ENCODE measurements at regions of chr7 and their contacts with region 1.

Region 1: DNA sequence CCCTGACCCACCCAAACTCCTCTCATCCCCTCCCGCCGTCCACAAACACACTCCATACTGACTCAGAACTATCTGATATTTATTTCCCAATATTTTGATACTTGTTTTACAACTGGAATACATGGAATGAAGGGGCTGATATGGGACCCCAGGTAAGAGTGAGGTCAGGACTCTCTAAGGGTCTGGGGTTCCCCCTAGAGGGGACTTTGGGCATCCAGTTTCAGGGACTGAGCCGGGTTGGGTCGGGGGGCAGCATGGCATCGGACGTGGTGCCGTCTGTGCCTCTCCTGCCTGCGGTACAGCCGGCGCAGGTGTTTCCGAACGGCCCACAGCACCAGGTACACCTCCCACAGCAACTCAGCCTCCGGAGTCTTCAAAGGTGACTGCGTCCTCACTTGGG is 7.5 kb downstream of the SPACDR start:
- DNase-seq: no peak
- H3K4me3 Mint-ChIP-seq: no peak overlapping the region
- H3K27ac Mint-ChIP-seq: no peak overlapping the region
- H3K4me1 Mint-ChIP-seq: no peaks in the 10 kb centered on the region
- H3K27me3 Mint-ChIP-seq: no peaks in the 10 kb centered on the region
- CTCF ChIP-seq: no peak

Region 2: DNA sequence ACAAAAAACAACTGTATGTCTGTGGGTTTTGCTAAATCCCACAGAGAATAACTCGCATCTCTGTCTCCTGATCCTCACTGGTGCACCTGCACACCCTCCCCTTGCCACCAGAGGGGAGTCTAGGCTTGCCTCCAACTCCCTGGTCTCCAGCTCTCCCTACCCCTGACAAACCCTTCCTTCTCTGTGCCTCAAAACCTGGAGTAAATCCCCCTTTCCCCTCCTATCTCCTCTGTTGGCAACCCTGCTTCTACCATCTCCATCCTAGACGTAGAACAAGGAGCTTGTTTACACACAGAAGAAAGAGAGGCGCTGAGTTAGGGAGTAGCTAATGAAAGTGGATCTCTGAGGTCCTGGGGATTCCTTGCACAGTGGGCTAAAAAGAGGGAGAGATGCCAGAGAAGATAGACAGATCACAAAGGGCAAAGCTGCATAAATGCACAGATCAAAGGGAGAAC is 323.8 kb before region 1 on chr7:
- CTCF ChIA-PET with region 1: no interaction called
- POLR2A ChIA-PET with region 1: no interaction called
- intact Hi-C with region 1: no loop called
- DNase-seq: peak; percentile 71
- H3K4me3 Mint-ChIP-seq: no peak overlapping the region
- H3K27ac Mint-ChIP-seq: no peak overlapping the region
- H3K4me1 Mint-ChIP-seq: peaks cover 11% of the 10 kb centered on the region
- H3K27me3 Mint-ChIP-seq: peaks cover 10% of the 10 kb centered on the region
- CTCF ChIP-seq: peak; percentile 93

Region 3: GRCh38 chr7:100380196-100380595 is 76.4 kb before region 1 on chr7:
- CTCF ChIA-PET with region 1: no interaction called
- POLR2A ChIA-PET with region 1: no interaction called
- intact Hi-C with region 1: no loop called
- DNase-seq: no peak
- H3K4me3 Mint-ChIP-seq: no peak overlapping the region
- H3K27ac Mint-ChIP-seq: no peak overlapping the region
- H3K4me1 Mint-ChIP-seq: no peaks in the 10 kb centered on the region
- H3K27me3 Mint-ChIP-seq: peaks cover 29% of the 10 kb centered on the region
- CTCF ChIP-seq: no peak

Region 4: DNA sequence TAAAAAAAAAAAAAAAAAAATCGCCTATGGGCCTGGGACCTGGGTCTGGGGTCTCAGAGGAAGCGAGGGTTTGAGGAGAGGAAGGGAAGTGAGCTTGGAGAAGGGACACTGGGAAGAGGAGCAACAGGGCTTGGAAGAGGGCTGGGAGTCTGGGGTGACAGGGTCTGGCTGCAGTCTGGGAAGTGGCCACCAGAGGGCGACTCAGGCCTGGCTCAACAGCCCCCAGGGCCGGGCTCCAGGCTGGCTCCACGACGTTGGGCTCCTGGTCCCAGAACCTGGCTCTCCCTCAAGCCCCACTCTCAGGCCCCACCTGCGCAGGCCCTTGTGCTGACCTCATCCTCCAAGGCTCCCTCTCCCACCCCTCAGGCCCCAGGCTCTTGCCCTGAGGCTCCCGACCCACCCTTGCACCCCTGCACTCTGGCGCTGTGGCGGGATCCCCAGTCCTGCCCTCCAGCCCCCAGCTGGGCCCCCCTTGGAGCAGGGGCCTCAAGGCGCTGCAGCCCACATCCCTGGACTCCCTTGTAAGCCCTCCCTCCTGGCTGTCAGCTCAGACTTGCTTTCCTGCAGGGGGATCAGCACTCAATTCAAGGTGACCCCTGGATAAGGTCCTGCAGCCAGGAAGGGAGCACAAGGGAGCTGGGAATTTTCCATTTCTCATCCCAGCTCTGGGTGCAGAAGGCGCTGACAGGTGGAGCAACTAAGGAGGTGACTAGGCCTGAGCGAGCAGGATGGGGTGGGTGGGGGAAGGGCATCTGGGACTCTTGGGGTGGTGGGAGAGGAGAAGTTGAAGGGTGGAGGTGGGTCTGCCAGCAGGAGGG is 12.9 kb after region 1 on chr7:
- CTCF ChIA-PET with region 1: interaction called, 12 read pairs
- POLR2A ChIA-PET with region 1: interaction called, 6 read pairs
- intact Hi-C with region 1: no loop called
- DNase-seq: peak; percentile 64
- H3K4me3 Mint-ChIP-seq: no peak overlapping the region
- H3K27ac Mint-ChIP-seq: no peak overlapping the region
- H3K4me1 Mint-ChIP-seq: peaks cover 5% of the 10 kb centered on the region
- H3K27me3 Mint-ChIP-seq: no peaks in the 10 kb centered on the region
- CTCF ChIP-seq: peak; percentile 94